ENCODE measurements at regions of chr1 and their contacts with region 1.

Region 1: GRCh38 chr1:224457782-224458144 is 23.2 kb upstream of the WDR26 start:
- DNase-seq: no peak
- ATAC-seq: no peak

Region 2: GRCh38 chr1:224113918-224114786 is 343.6 kb before region 1 on chr1 and contains the start of gene FBXO28:
- intact Hi-C with region 1: loop called (anchors 1 kb)
- DNase-seq: peak; percentile 97
- ATAC-seq: peak; percentile 99
- total RNA-seq, gene FBXO28: 17.3 TPM

Region 3: GRCh38 chr1:224434691-224435317 is 23.0 kb before region 1 on chr1 and contains the start of gene WDR26:
- intact Hi-C with region 1: loop called (anchors 2 kb)
- DNase-seq: peak; percentile 85
- ATAC-seq: peak; percentile 84
- total RNA-seq, gene WDR26: 55.4 TPM